PC-9 (cell line): ENCODE measurements at regions of chr5 and their contacts with region 1.

Region 1: DNA sequence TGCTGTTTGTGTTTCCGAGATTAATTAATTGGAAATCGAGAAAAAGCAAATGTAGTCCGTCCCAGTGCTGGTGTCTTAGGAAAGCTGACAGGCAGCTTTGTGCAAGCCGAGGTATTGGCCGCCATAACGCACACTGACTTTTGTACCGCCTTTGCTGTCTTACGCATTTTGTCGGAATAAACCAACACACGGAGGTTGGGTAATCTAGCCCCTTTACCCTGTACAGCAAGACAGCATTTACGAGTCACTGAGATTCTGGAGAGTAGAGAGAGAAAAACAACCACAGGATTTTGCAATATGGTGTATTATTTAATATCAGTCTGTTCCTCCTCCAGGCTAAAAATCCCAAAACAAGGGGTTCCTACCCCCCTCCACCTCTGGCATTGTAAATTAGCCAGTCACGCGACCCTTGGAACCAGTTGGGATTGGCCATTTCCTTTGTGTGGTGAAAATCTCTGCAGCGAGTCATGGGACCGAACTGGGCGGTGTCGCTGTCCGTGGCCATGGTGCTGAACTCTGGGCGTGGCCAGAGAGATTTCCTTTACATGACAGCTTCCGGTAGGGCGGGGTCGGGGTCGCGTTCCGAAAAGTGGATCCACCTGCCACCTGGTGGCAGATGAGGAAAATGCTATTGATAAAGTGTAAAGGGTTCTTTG is 10.3 kb upstream of the PCDHB1 start:
- DNase-seq: peak; percentile 72 to 87
- H3K4me3 ChIP-seq: peak overlapping the region; percentile 34; the same call in 1 of the 2 replicates
- H3K27ac ChIP-seq: no peak overlapping the region
- H3K4me1 ChIP-seq: no peaks in the 10 kb centered on the region
- H3K27me3 ChIP-seq: no peaks in the 10 kb centered on the region
- CTCF ChIP-seq: peak; percentile 80

Region 2: GRCh38 chr5:140840978-140841959 is 199.6 kb before region 1 on chr5 and contains the start of gene PCDHA8:
- CTCF ChIA-PET with region 1: interaction called, 4 read pairs
- POLR2A ChIA-PET with region 1: no interaction called
- intact Hi-C with region 1: loop called (anchors 1 kb)
- DNase-seq: peak in 1 of 2 experiments; percentile 13
- H3K4me3 ChIP-seq: no peak within 1 kb of the TSS
- H3K27ac ChIP-seq: no peak within 1 kb of the TSS
- H3K4me1 ChIP-seq: no peaks in the 10 kb centered on the region
- H3K27me3 ChIP-seq: no peaks in the 10 kb centered on the region
- CTCF ChIP-seq: peak; percentile 43
- total RNA-seq, gene PCDHA8: not detected in 2 replicates

Region 3: GRCh38 chr5:140875066-140876065 is 165.5 kb before region 1 on chr5 and contains the start of gene PCDHA12:
- CTCF ChIA-PET with region 1: no interaction called
- POLR2A ChIA-PET with region 1: no interaction called
- intact Hi-C with region 1: loop called (anchors 1 kb)
- DNase-seq: no peak
- H3K4me3 ChIP-seq: no peak within 1 kb of the TSS
- H3K27ac ChIP-seq: no peak within 1 kb of the TSS
- H3K4me1 ChIP-seq: no peaks in the 10 kb centered on the region
- H3K27me3 ChIP-seq: no peaks in the 10 kb centered on the region
- CTCF ChIP-seq: no peak
- total RNA-seq, gene PCDHA12: not detected in 2 replicates

Region 4: DNA sequence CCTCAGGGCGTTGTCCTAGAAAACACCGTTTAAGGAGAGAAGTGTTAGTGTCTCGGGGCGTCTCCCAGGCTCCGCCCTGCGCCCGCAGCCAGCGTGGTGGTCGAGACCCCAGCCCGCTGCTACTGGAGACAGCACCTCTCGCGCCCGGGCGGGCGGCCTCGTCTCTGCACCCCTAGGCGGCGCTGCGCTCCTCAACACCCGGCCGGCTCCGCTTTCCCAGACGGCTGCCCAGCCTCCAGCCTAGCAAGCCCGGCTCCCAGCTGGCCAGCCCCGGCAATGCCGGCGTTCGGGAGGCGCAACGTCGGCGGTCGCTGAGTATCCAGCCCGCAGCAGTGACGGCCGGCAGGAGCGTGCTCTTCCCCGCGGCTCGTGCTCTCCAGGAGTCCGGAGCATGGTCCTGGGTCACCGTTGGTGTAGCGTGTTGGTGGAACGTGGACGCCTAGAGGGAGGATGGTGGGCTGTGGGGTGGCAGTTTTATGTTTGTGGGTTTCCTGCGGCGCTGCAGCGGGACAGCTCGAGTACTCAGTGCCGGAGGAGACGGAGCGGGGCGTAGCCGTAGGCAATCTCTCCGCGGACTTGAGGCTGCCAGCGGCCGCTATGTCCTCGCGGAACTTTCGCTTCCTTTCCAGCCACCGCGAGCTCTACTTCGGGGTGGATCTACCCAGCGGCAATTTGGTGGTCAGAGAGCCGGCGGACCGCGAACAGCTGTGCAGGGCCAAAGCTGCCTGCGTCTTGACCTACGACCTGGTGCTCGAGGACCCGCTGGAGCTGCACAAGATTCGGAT is 114.3 kb before region 1 on chr5:
- CTCF ChIA-PET with region 1: interaction called, 26 read pairs
- POLR2A ChIA-PET with region 1: no interaction called
- intact Hi-C with region 1: loop called (anchors 1 kb)
- DNase-seq: peak; percentile 49 to 88
- H3K4me3 ChIP-seq: peak overlapping the region; percentile 35; the same call in 1 of the 2 replicates
- H3K27ac ChIP-seq: no peak overlapping the region
- H3K4me1 ChIP-seq: no peaks in the 10 kb centered on the region
- H3K27me3 ChIP-seq: no peaks in the 10 kb centered on the region
- CTCF ChIP-seq: peak; percentile 62